Left cardiac atrium (tissue), 4 donors: ENCODE measurements at regions of chr1 and their contacts with region 1.

Region 1: DNA sequence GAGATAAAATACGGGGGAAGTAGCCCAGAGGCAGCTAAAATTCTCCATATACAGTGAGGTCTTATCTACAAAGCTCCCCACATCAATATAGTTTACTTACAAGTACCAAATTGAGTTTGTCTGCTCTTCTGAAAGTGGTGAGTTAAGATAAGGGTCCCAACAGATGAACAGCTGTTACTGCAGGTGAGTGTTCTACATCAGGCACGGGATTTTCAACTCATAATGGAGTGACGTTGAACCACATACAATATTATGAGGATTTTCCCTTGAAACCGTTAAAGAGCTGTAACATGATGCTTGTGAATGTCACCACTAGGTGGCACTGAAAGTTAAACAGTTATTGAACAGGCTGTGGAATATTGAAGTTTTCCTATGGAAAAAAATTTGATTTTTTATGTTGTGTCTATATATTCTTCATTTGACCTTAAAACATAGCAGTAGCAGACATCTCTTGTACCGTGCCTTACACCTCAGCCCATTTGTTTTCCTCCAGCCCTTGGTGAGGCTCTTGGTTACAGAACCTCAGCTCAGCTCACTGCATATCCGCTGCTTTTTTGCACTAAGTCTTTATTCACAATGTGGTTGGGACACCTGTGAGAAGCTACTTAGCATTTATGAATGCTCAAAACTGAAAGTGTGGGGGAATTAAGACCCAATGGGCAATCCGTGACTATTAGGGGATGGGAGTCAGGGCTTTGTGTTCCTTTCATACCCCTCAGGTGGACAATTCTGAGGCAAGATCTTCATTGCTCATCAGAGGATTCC is 23.2 kb downstream of the CD1D start:
- DNase-seq: no peak
- ATAC-seq: peak in 1 of 2 donors; percentile 65

Region 2: GRCh38 chr1:158969855-158970254 is 766.0 kb after region 1 on chr1:
- intact Hi-C with region 1: no loop called
- DNase-seq: no peak
- ATAC-seq: no peak

Region 3: DNA sequence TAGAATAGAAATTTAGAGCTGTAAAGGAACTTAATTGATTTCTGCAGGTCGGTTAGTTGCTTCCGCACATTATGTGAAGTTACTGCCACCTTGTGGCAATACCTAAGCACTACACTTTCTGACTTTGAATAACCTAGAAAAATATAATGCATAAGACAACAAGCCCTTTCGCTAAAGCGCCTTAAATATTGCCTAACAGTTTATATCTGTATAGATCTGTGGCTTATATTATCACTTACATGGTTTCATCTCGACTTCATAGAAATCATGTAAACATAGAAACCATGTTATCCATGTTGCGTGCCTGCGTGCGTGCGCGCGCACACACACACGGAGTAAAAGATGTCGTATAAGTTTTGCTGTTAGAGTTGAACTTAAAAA is 794.9 kb after region 1 on chr1:
- intact Hi-C with region 1: loop called in 1 of 2 experiments (anchors 5 kb)
- DNase-seq: peak; percentile 66
- ATAC-seq: peak; percentile 51 to 66

Region 4: DNA sequence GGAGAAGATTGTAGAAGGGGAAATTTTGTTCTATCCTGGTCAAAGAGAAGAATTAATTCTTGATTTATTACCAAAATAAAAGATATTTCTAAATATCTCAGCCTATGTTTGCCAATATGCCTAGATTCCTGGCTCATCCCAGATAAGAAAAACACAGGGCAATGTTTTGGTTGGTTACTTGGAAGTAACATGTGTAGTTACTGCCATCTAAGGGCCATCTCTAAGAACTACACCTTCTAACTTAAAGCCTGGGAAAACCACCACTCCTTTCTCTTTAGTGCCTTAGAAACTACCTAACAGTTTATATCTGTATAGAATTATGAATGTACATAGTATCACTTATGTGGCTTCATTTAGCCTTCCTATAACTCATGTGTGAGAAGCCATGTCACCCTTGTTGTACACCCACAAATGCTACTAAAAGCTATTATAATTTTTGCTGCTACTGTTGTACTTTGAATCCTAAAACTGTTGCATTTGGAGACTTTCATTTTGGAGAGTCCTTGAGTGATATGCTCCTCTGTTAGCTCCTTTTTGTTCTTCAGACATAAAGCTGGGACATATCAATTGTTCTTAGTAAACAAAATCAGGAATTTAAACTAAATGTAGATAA is 868.2 kb after region 1 on chr1:
- intact Hi-C with region 1: loop called in 1 of 2 experiments (anchors 10 kb)
- DNase-seq: no peak
- ATAC-seq: peak; percentile 46 to 71